Aorta (tissue), 5 donors: ENCODE measurements at regions of chr12 and their contacts with region 1.

Region 1: GRCh38 chr12:102484428-102484958 is 4.1 kb upstream of the IGF1 start:
- DNase-seq: peak; percentile 67 to 80
- ATAC-seq: peak; percentile 83
- H3K4me3 ChIP-seq: peak overlapping the region in 1 of 2 donors; percentile 4
- H3K27ac ChIP-seq: no peak overlapping the region
- H3K4me1 ChIP-seq: no peaks in the 10 kb centered on the region
- H3K27me3 ChIP-seq: no peaks in the 10 kb centered on the region

Region 2: GRCh38 chr12:101891462-101892273 is 592.8 kb before region 1 on chr12:
- intact Hi-C with region 1: no loop called
- DNase-seq: peak in 1 of 2 donors; percentile 73
- ATAC-seq: peak; percentile 62
- H3K4me3 ChIP-seq: no peak overlapping the region
- H3K27ac ChIP-seq: peak overlapping the region; percentile 22 to 39
- H3K4me1 ChIP-seq: peaks cover 0 to 3% of the 10 kb centered on the region in 2 donors
- H3K27me3 ChIP-seq: no peaks in the 10 kb centered on the region

Region 3: DNA sequence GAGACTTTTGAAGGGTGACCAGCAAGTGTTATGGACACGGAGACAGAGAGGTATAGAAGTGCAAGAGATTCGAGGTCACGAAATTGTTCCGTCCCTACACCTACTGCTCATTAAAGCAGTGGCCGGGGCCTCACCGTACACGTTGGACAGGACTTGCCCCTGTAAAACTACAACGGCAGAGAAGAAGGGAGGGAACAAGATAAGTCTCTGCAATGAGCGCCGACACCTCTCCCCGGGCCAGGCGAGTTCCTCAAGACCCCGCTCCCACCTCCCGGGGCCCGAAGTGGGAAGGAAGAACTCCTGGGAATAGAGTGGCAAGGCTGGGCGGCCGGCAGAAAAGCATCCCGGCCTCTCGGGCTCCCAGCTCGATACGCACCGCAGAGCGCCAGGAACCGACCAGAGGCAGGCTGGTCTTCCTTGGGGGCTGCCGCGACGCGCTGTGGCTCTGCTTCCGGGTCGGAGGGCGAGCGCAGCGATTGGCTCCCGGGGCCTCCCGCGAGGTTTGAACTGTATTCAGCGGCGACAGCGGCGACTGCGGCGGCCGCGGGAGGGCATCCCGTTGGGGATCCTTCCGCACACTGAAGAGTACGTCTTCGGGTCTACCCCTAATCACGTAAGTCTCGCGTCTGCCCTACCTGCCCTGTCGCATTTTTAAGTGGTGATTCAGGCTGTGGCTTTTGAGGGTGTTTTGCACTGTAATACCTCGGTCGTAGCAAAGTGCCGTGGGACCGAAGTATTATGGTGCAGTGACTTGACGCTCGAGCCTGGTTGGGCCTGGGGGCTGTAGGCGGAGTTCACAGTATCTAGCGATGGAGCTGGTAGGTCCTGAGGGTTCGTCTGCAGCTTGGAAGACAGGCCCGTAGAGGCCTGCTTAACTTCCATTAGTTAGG is 364.6 kb before region 1 on chr12 and contains the starts of genes NUP37 and PARPBP:
- intact Hi-C with region 1: loop called (anchors 5 kb)
- DNase-seq: peak; percentile 94 to 97
- ATAC-seq: peak; percentile 98
- H3K4me3 ChIP-seq: peak within 1 kb of the TSS; percentile 77 to 79
- H3K27ac ChIP-seq: peak within 1 kb of the TSS; percentile 6 to 41
- H3K4me1 ChIP-seq: peaks cover 0 to 3% of the 10 kb centered on the region in 2 donors
- H3K27me3 ChIP-seq: no peaks in the 10 kb centered on the region
- total RNA-seq, gene NUP37: 12.6 to 16.1 TPM
- total RNA-seq, gene PARPBP: 2.9 to 7.2 TPM

Region 4: GRCh38 chr12:102169922-102170621 is 314.4 kb before region 1 on chr12:
- intact Hi-C with region 1: loop called in 1 of 2 experiments (anchors 5 kb)
- DNase-seq: no peak
- ATAC-seq: no peak
- H3K4me3 ChIP-seq: no peak overlapping the region
- H3K27ac ChIP-seq: no peak overlapping the region
- H3K4me1 ChIP-seq: peaks cover 0 to 2% of the 10 kb centered on the region in 2 donors
- H3K27me3 ChIP-seq: no peaks in the 10 kb centered on the region

Region 5: GRCh38 chr12:102300824-102301461 is 183.6 kb before region 1 on chr12:
- intact Hi-C with region 1: loop called (anchors 10 kb)
- DNase-seq: no peak
- ATAC-seq: no peak
- H3K4me3 ChIP-seq: no peak overlapping the region
- H3K27ac ChIP-seq: no peak overlapping the region
- H3K4me1 ChIP-seq: no peaks in the 10 kb centered on the region
- H3K27me3 ChIP-seq: no peaks in the 10 kb centered on the region

Region 6: DNA sequence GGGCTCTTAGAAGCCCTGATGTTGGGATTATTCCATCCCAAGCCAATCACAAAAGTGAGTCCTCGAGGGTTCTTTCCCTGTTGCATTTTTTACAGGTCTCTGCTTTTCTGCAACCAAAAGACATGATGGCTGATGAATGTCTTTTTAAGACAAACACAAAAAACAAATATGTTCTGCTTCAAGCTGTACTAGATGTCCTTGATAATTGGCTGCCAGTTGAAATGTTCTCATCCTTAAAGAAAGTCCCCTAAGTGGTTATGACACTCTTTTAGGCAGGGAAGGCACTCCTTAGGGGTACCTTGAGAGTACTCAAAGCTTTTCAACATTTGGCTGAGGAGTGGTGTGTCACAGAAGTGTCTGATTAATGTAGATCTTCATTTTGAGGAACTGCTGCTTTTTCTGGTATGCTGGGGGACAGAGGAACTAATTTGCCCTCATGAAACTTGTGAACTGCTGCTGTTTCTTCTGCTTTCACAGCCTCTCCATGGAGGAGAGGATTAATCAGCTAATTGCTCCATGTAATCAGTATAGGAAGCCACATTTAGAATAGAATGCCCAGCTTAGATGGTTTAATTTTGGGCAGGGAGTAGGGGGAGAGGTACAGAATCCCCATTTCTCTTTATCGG is 18.7 kb after region 1 on chr12:
- intact Hi-C with region 1: no loop called
- DNase-seq: no peak
- ATAC-seq: no peak
- H3K4me3 ChIP-seq: no peak overlapping the region
- H3K27ac ChIP-seq: no peak overlapping the region
- H3K4me1 ChIP-seq: no peaks in the 10 kb centered on the region
- H3K27me3 ChIP-seq: no peaks in the 10 kb centered on the region